ENCODE measurements at regions of chr20 and their contacts with region 1.

Region 1: GRCh38 chr20:2840138-2840966 is at the starts of genes PCED1A and VPS16:
- DNase-seq: peak; percentile 91
- ATAC-seq: peak; percentile 98
- H3K4me3 Mint-ChIP-seq: peak within 1 kb of the TSS; percentile 83
- H3K27ac Mint-ChIP-seq: peak within 1 kb of the TSS; percentile 88
- H3K4me1 Mint-ChIP-seq: peaks cover 36% of the 10 kb centered on the region
- H3K27me3 Mint-ChIP-seq: no peaks in the 10 kb centered on the region
- CTCF ChIP-seq: no peak
- total RNA-seq, gene PCED1A: 33.9 to 34.3 TPM
- total RNA-seq, gene VPS16: 34.5 to 38.7 TPM

Region 2: GRCh38 chr20:2873010-2873746 is 32.8 kb after region 1 on chr20 and contains the start of gene PTPRA:
- CTCF ChIA-PET with region 1: no interaction called
- POLR2A ChIA-PET with region 1: interaction called, 10 read pairs
- intact Hi-C with region 1: no loop called
- DNase-seq: peak; percentile 95
- ATAC-seq: peak; percentile 85
- H3K4me3 Mint-ChIP-seq: peak within 1 kb of the TSS; percentile 82
- H3K27ac Mint-ChIP-seq: peak within 1 kb of the TSS; percentile 94
- H3K4me1 Mint-ChIP-seq: peaks cover 51% of the 10 kb centered on the region
- H3K27me3 Mint-ChIP-seq: no peaks in the 10 kb centered on the region
- CTCF ChIP-seq: no peak
- total RNA-seq, gene PTPRA: 42.0 to 43.1 TPM

Measured in activated CD8-positive, alpha-beta T cell treated with anti-CD3 and anti-CD28 coated beads for 36 hours (primary cell).